ENCODE measurements at regions of chr10 and their contacts with region 1.

Region 1: DNA sequence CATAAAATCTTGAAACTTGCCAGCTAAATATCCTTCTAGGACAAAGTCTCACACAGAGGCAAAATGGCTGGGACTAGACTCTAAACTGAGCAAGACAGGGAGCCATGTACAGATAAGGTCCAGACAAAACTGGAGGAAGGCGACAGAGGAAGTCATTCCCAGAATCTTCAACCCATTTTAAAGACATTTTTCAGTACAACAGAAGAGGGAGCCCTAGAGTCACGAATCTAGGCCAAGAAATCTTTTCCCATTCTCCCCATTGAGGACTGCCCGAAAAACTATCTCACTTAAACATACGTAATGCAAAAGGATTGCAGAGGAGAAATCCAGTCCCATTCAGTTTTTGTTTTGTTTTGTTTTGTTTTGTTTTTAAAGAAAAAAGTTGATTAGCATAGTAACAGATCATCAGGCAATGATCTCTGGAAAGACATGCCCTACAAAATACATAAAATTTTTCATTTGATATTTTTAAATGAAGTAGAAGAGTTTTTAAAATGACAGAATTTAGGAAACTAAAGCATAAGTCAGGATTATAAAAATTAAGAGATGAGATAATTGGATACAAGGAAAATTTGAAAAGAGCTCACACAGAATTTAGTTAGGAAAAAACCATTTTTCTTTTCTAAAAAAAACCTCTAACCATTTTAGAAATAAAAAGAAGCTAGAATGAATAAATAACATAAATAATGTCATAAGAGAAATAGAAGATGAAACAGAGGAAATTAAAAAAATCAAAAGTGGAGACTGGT is 16.9 kb upstream of the PRF1 start:
- DNase-seq: no peak
- H3K4me3 Mint-ChIP-seq: no peak overlapping the region
- H3K27ac Mint-ChIP-seq: peak overlapping the region; percentile 84
- H3K4me1 Mint-ChIP-seq: peaks cover 39% of the 10 kb centered on the region
- H3K27me3 Mint-ChIP-seq: no peaks in the 10 kb centered on the region

Region 2: DNA sequence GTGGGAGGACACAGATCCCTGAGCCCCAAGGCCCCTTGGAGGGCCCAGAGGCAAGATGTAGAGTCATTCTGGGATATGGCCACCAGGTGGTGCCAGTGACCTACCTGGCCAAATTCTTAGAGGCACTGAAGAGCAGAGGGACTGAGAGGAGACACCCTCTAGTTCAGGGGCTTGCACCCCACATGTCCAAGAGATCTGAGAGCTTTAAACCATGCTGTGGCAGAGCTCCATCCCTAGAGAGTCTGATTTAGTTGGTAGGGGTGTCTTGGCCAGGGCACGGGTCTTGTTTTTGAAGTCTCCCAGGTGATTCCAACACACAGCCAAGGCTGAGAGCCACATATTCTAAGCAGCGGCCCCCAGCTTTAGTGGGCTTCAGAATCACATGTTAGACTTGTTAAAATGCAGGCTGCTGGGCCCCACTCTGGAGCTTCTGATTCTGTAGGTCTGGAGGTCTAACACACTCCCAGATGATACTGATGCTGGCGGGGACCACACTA is 69.4 kb before region 1 on chr10:
- intact Hi-C with region 1: loop called (anchors 2 kb)
- DNase-seq: peak; percentile 92
- H3K4me3 Mint-ChIP-seq: no peak overlapping the region
- H3K27ac Mint-ChIP-seq: no peak overlapping the region
- H3K4me1 Mint-ChIP-seq: no peaks in the 10 kb centered on the region
- H3K27me3 Mint-ChIP-seq: peaks cover 1% of the 10 kb centered on the region

Region 3: DNA sequence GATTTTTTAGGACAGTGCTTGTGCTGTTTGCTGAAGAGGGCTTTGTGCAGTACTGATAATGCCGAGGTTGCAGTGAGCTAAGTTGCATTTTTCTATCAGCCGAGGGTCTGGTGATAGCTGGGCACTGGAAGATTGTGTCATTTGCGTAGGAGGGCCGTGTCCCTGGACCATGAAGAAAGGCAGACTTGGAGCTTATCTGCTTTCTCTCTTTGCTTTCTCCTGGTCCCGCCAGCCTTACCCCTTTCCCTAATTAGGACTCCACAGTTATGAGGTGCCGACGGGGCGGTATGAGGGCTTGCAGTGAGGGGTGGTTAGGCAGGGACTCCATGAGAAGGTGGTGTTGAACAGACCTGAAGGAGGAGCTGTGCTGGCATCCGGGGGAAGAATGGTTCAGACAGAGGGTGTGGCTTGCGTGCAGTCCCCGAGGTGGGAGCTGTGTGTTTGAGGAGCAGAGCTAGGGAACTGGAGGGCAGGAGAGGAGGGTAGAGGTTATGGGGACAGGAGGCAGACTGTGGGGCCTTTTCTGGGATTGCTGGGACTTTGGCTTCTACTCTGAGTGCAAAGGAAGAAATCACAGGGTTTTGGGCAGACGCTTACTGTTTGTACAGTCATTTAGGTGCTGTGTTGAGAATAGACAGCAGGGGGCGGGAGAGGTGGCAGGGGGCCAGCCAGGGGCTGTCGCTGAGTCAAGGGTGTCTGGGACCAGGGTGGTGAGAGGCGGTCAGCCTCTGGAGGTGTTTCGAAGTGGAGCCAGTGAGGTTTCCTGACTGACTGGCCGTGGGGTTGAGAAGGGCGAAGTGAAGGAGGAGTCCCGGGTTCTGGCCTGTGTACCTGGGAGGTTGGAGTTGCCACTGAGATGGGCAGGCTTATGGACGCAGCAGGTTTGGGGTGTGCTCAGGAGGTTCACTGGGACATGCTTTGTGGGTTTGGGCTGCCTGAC is 60.3 kb before region 1 on chr10:
- intact Hi-C with region 1: loop called (anchors 1 kb)
- DNase-seq: peak; percentile 90
- H3K4me3 Mint-ChIP-seq: peak overlapping the region; percentile 76
- H3K27ac Mint-ChIP-seq: peak overlapping the region; percentile 70
- H3K4me1 Mint-ChIP-seq: peaks cover 24% of the 10 kb centered on the region
- H3K27me3 Mint-ChIP-seq: no peaks in the 10 kb centered on the region

Region 4: DNA sequence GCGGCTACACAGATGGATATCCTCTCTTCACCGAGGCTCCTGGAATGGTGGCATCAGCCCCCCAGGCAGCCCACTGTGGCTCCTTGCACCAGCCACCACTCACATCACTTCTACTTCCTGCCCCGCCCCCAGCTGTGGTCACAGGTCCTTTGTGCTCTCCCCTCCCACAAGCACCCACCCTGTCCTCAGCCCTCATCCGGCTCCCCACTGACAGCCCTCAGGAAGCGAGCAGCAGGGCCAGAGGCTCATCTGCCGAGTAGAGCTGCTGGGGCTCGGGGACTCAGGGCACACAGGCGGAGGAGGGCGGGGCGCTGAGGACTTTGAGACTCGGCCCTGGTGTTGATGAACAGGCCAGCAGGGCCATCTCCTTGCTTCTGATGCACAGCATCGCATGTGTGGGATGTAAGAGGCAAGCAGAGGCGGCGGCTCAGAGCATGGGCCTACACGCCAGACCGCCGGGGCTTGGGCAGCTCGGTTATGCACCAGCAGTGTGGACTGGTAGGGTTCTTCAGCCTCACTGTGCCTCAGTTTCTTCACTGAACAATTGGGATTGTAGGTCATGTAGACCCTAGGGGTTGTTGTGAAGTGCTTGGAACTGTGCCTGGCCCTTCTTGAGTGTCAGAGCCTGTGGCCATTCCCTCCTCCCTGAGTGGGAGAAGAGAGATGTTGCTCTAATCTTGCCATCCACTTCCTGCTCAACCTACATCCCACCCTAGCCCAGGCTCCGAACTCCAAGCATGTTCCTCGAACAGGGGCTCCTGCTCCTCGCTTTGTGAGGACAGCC is 16.6 kb before region 1 on chr10 and contains the start of gene PRF1:
- intact Hi-C with region 1: loop called (anchors 2 kb)
- DNase-seq: peak; percentile 94
- H3K4me3 Mint-ChIP-seq: peak within 1 kb of the TSS; percentile 85
- H3K27ac Mint-ChIP-seq: peak within 1 kb of the TSS; percentile 88
- H3K4me1 Mint-ChIP-seq: peaks cover 34% of the 10 kb centered on the region
- H3K27me3 Mint-ChIP-seq: peaks cover 2% of the 10 kb centered on the region
- total RNA-seq, gene PRF1: 76.5 and 79.9 TPM in 2 replicates

Region 5: GRCh38 chr10:70656489-70656888 is 37.0 kb after region 1 on chr10:
- intact Hi-C with region 1: loop called (anchors 1 kb)
- DNase-seq: peak; percentile 76
- H3K4me3 Mint-ChIP-seq: peak overlapping the region; percentile 55
- H3K27ac Mint-ChIP-seq: peak overlapping the region; percentile 77
- H3K4me1 Mint-ChIP-seq: peaks cover 18% of the 10 kb centered on the region
- H3K27me3 Mint-ChIP-seq: peaks cover 14% of the 10 kb centered on the region

Region 6: GRCh38 chr10:70758757-70759514 is 139.5 kb after region 1 on chr10:
- intact Hi-C with region 1: loop called (anchors 2 kb)
- DNase-seq: peak; percentile 91
- H3K4me3 Mint-ChIP-seq: no peak overlapping the region
- H3K27ac Mint-ChIP-seq: no peak overlapping the region
- H3K4me1 Mint-ChIP-seq: peaks cover 8% of the 10 kb centered on the region
- H3K27me3 Mint-ChIP-seq: no peaks in the 10 kb centered on the region

Region 7: DNA sequence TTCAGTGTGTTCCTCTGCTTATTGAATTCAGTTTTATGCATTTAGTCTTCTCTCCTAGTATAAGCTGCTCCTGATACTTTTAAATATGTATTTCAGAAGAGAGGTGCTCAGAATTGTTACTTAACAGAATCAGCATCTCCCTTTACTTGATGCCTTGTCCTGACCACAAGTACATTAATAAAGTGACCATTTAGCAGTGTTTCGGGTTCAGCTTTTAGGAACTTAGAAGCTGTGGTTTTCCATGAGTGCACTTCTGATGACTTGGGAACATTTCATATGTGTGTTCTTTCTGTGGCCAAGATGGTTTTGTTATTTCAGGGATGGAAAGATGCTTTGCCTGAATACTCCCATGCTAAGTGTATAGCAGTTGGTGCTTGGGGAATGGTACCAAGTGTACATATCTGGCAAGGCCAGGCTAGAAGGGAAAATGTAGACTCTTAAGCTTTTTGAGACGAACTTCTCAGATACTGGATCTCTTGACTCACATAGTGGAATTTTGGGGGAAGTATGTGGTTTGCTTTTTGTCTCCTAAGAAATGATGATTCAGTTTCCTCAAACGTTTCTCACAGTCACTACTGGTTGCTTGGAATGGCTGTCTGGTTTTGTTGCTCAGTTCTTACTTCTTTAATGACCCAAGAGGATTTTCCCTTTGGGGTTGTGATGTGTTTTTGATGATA is 213.5 kb after region 1 on chr10:
- intact Hi-C with region 1: no loop called
- DNase-seq: no peak
- H3K4me3 Mint-ChIP-seq: peak overlapping the region; percentile 68
- H3K27ac Mint-ChIP-seq: peak overlapping the region; percentile 86
- H3K4me1 Mint-ChIP-seq: peaks cover 42% of the 10 kb centered on the region
- H3K27me3 Mint-ChIP-seq: no peaks in the 10 kb centered on the region